ENCODE measurements at regions of chr2 and their contacts with region 1.

Region 1: DNA sequence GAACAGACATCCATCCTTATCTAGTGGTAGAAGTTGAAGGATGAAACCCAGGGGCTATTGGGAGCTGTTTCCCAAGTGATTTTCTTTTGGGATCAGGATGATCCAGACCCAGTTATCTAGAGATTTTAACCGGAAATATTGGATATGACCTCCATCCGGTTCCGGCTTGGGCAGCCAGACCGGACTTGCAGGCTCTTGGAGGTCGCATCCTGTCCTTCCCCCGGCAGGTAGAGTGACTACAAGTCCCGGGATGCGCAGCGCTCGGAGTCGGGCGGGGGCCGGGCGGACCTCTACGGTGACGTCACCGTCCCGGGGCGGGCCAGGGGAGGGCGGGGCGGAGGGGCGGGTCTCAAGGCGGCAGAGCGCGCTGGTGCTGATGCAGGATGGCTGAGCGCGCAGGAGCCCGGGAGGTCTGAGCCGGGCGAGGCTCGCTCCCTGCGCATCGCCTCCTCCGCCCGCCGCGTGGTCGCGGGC is at the start of gene KIF5C:
- DNase-seq: peak; percentile 82
- ATAC-seq: peak; percentile 77
- H3K4me3 ChIP-seq: peak within 1 kb of the TSS; percentile 64
- H3K27ac ChIP-seq: no peak within 1 kb of the TSS
- H3K4me1 ChIP-seq: peaks cover 18% of the 10 kb centered on the region
- H3K27me3 ChIP-seq: peaks cover 28% of the 10 kb centered on the region
- CTCF ChIP-seq: no peak
- total RNA-seq, gene KIF5C: 4.0 and 7.3 TPM in 2 replicates

Region 2: GRCh38 chr2:148545390-148546256 is 329.3 kb before region 1 on chr2:
- CTCF ChIA-PET with region 1: no interaction called
- POLR2A ChIA-PET with region 1: interaction called, 18 read pairs
- intact Hi-C with region 1: no loop called
- DNase-seq: no peak
- ATAC-seq: no peak
- H3K4me3 ChIP-seq: no peak overlapping the region
- H3K27ac ChIP-seq: no peak overlapping the region
- H3K4me1 ChIP-seq: no peaks in the 10 kb centered on the region
- H3K27me3 ChIP-seq: no peaks in the 10 kb centered on the region
- CTCF ChIP-seq: no peak

Region 3: GRCh38 chr2:149152339-149152974 is 277.6 kb after region 1 on chr2:
- CTCF ChIA-PET with region 1: interaction called, 13 read pairs
- POLR2A ChIA-PET with region 1: no interaction called
- intact Hi-C with region 1: no loop called
- DNase-seq: no peak
- ATAC-seq: no peak
- H3K4me3 ChIP-seq: no peak overlapping the region
- H3K27ac ChIP-seq: no peak overlapping the region
- H3K4me1 ChIP-seq: no peaks in the 10 kb centered on the region
- H3K27me3 ChIP-seq: peaks cover 75% of the 10 kb centered on the region
- CTCF ChIP-seq: no peak